ENCODE measurements at regions of chr4 and their contacts with region 1.

Region 1: GRCh38 chr4:55037728-55038127 is 87.7 kb downstream of the KDR start:
- DNase-seq: no peak
- H3K4me3 ChIP-seq: no peak overlapping the region
- H3K27ac ChIP-seq: peak overlapping the region; percentile 48 to 67
- H3K4me1 ChIP-seq: peaks cover 0 to 52% (median 22%) of the 10 kb centered on the region in 4 donors
- H3K27me3 ChIP-seq: no peaks in the 10 kb centered on the region
- CTCF ChIP-seq: no peak

Region 2: DNA sequence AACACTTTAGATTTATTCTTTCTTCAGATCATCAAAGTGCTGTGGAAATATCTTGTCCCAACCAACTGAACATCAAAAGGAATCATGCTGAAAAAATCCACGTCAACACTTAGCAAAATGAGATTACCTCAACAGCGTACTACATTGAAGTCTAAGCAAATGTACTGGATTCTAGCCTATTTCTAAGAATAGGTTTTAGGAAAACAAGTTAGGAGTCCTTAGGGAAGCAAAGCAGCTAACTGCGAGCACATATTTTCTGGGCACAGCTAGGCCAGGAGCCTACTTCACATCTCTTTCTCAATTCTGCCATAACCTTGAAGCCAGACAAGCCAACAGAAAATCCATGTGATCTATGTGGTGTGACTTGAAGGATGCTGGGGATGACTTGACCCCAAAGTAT is 65.5 kb after region 1 on chr4:
- intact Hi-C with region 1: loop called (anchors 1 kb)
- DNase-seq: peak in 1 of 2 donors; percentile 71
- H3K4me3 ChIP-seq: no peak overlapping the region
- H3K27ac ChIP-seq: peak overlapping the region; percentile 74 to 75
- H3K4me1 ChIP-seq: peaks cover 0 to 25% (median 5%) of the 10 kb centered on the region in 4 donors
- H3K27me3 ChIP-seq: no peaks in the 10 kb centered on the region
- CTCF ChIP-seq: no peak